ENCODE measurements at regions of chr12 and their contacts with region 1.

Region 1: DNA sequence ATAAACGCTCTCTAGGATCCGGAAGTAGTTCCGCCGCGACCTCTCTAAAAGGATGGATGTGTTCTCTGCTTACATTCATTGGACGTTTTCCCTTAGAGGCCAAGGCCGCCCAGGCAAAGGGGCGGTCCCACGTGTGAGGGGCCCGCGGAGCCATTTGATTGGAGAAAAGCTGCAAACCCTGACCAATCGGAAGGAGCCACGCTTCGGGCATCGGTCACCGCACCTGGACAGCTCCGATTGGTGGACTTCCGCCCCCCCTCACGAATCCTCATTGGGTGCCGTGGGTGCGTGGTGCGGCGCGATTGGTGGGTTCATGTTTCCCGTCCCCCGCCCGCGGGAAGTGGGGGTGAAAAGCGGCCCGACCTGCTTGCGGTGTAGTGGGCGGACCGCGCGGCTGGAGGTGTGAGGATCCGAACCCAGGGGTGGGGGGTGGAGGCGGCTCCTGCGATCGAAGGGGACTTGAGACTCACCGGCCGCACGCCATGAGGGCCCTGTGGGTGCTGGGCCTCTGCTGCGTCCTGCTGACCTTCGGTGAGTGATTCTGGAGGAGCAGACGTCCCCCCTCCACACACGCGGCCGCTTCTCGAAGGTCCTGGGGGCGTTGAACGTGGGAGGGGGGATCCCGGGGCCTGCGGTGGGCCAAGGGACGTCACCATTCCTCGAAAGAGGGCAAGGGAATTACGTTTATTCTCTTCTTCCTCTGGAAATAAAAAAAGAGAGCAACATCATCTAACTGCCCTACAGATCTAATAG is at the start of gene HSP90B1:
- DNase-seq: peak; percentile 100
- H3K4me3 Mint-ChIP-seq: peak within 1 kb of the TSS; percentile 91
- H3K27ac Mint-ChIP-seq: peak within 1 kb of the TSS; percentile 99
- H3K4me1 Mint-ChIP-seq: peaks cover 73% of the 10 kb centered on the region
- H3K27me3 Mint-ChIP-seq: peaks cover 6% of the 10 kb centered on the region
- total RNA-seq, gene HSP90B1: 427 and 446 TPM in 2 replicates

Region 2: GRCh38 chr12:103503977-103504376 is 426.2 kb before region 1 on chr12:
- intact Hi-C with region 1: loop called (anchors 5 kb)
- DNase-seq: peak; percentile 28
- H3K4me3 Mint-ChIP-seq: no peak overlapping the region
- H3K27ac Mint-ChIP-seq: no peak overlapping the region
- H3K4me1 Mint-ChIP-seq: peaks cover 41% of the 10 kb centered on the region
- H3K27me3 Mint-ChIP-seq: peaks cover 19% of the 10 kb centered on the region

Region 3: DNA sequence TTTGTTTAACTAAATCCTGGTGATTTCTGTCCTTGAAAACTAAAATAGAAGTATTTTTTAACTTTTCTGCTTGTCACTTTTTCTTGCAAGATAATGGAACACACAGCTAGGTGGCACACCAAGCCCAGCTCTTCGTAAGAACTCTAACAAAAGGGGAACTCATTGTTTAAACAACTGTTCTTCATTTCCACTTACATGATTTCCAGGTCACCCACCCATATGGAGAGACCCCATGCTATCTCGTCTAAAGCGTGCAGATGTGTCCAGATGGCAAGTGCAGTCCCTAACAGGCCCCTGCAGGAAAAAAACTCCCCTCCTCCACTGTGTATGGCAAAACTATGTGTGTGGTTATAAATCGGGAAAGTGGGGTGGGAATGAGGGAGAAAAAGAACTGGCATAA is 45.9 kb before region 1 on chr12:
- intact Hi-C with region 1: loop called (anchors 1 kb)
- DNase-seq: no peak
- H3K4me3 Mint-ChIP-seq: no peak overlapping the region
- H3K27ac Mint-ChIP-seq: no peak overlapping the region
- H3K4me1 Mint-ChIP-seq: peaks cover 48% of the 10 kb centered on the region
- H3K27me3 Mint-ChIP-seq: peaks cover 3% of the 10 kb centered on the region

Region 4: GRCh38 chr12:103901518-103902173 is 28.6 kb before region 1 on chr12:
- intact Hi-C with region 1: no loop called
- DNase-seq: no peak
- H3K4me3 Mint-ChIP-seq: peak overlapping the region; percentile 32
- H3K27ac Mint-ChIP-seq: no peak overlapping the region
- H3K4me1 Mint-ChIP-seq: peaks cover 18% of the 10 kb centered on the region
- H3K27me3 Mint-ChIP-seq: no peaks in the 10 kb centered on the region

Region 5: DNA sequence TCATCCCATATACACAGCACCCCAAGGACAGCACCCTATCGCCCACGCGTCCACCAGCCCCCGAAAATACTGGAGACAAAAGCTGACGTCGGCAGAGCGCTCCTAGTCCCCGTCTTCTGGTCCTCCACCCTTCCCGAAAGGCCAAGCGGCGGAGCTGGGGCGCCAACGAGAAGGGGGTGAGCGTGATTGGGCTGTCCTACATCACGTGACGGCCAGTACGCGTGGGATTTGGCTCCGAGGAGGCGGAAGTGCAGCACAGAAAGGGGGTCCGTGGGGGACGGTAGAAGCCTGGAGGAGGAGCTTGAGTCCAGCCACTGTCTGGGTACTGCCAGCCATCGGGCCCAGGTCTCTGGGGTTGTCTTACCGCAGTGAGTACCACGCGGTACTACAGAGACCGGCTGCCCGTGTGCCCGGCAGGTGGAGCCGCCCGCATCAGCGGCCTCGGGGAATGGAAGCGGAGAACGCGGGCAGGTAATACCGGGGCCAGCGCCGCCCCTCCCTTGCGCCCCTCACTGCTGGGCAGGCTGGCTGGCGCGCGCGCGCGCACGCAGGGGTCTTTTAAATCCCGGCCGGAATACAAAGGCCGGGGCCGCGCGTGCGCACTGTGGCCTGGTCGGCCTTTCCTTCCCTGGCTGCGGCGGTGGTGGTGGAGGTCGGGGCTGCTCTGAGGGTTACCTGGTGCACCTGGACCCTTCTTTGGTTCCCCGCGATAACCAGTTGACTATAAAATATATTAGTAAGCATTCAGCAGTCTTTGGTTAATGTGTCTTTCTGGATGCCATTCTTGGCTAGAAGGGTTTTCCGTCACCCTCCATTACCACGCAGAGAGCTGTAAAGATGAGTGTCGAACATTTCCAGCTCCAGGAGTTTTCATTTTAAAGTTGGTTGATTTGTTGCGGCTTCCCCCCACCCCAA is 35.6 kb after region 1 on chr12 and contains the start of gene TDG:
- intact Hi-C with region 1: loop called (anchors 1 kb)
- DNase-seq: peak; percentile 95
- H3K4me3 Mint-ChIP-seq: peak within 1 kb of the TSS; percentile 98
- H3K27ac Mint-ChIP-seq: peak within 1 kb of the TSS; percentile 99
- H3K4me1 Mint-ChIP-seq: peaks cover 47% of the 10 kb centered on the region
- H3K27me3 Mint-ChIP-seq: no peaks in the 10 kb centered on the region
- total RNA-seq, gene TDG: 80.4 and 81.6 TPM in 2 replicates

Region 6: DNA sequence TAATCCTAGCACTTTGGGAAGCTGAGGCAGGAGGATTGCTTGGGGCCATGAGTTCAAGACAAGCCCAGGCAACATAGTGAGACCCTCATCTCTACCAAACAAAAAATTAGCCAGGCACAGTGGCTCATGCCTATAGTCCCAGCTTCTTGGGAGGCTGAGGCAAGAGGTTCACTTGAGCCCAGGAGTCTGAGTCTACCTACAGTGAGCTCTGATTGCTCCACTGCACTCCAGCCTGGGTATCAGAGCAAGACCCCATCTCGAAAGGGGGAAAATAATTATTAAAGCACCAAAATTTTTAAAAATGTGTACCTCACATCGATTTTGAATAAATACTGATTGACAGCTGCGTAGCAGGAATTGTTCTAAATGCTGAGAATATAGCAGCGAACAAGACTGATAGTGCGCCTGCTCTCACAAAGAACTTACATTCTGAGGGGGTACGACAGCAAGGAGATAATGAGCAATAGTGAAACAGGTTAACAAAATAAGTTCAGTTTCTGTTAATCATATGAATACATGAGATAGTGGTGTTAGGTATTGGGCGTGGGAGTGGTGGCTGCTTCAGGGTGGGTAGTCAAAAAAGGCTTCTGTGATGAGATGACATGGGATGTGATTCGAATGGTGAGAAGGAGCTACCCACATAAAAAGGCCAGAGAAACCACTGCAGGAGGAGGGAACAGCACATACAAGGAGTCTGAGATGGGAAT is 153.7 kb after region 1 on chr12:
- intact Hi-C with region 1: loop called (anchors 1 kb)
- DNase-seq: no peak
- H3K4me3 Mint-ChIP-seq: no peak overlapping the region
- H3K27ac Mint-ChIP-seq: peak overlapping the region; percentile 45
- H3K4me1 Mint-ChIP-seq: peaks cover 16% of the 10 kb centered on the region
- H3K27me3 Mint-ChIP-seq: no peaks in the 10 kb centered on the region

Region 7: GRCh38 chr12:104137913-104138796 is 207.9 kb after region 1 on chr12 and contains the start of gene NFYB:
- intact Hi-C with region 1: loop called (anchors 1 kb)
- DNase-seq: peak; percentile 91
- H3K4me3 Mint-ChIP-seq: peak within 1 kb of the TSS; percentile 87
- H3K27ac Mint-ChIP-seq: peak within 1 kb of the TSS; percentile 88
- H3K4me1 Mint-ChIP-seq: peaks cover 16% of the 10 kb centered on the region
- H3K27me3 Mint-ChIP-seq: peaks cover 7% of the 10 kb centered on the region
- total RNA-seq, gene NFYB: 25.0 and 25.2 TPM in 2 replicates

Region 8: DNA sequence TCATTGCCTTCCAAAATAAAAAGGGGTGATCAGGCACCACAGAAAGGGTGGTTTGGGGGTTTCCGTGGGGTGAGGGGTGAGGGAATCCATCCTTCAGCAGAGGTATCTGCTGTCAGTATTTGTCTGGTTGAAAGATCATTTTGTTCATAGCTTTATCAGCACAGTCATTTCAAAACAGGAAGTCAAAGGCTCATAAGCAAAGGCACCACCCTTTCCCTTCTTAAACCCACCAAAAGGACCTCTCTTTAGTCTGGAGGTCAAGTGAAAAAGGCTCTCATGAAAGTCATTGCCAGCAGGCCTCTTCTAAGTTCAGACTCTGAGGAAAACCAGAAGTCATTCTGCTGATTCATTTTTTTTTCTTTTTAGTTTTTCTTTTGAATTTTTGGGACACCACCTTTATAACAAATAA is 532.7 kb after region 1 on chr12:
- intact Hi-C with region 1: loop called (anchors 10 kb)
- DNase-seq: peak; percentile 46
- H3K4me3 Mint-ChIP-seq: peak overlapping the region; percentile 83
- H3K27ac Mint-ChIP-seq: peak overlapping the region; percentile 96
- H3K4me1 Mint-ChIP-seq: peaks cover 85% of the 10 kb centered on the region
- H3K27me3 Mint-ChIP-seq: no peaks in the 10 kb centered on the region